Psoas muscle (tissue), 8 donors: ENCODE measurements at regions of chr1 and their contacts with region 1.

Region 1: DNA sequence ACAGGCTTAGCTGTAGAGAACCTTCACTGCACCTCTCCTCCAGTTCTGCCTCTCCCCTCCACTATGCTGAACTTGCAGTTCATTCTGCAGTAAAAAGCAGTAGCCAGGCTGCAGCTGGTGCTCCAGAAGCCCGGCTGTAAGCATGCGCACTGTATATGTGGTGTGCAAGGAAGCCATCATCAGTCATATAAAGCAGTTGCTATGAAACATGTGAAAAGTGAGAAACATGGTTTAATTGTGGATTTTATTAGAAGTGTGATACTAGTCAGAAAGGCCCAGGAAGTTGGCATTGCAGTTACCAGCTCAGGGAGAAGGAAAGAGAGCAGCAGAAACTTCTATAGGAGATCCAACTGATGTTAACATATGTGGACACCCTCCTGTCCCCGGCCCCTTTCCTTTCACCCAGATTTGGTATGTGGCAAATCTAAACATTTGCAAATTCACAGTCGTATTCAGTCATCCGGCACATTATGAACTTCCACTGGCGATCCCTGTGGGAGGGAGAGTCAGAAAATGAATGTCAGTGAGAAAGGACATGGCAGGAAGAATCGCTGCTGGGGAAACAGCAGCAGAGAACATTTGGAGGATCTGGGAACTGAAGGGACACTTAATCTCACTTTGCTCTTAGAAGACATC is 32.8 kb downstream of the DPT start:
- DNase-seq: no peak
- ATAC-seq: no peak
- H3K4me3 ChIP-seq: no peak overlapping the region
- H3K27ac ChIP-seq: no peak overlapping the region
- H3K4me1 ChIP-seq: no peaks in the 10 kb centered on the region
- H3K27me3 ChIP-seq: no peaks in the 10 kb centered on the region
- CTCF ChIP-seq: no peak

Region 2: GRCh38 chr1:168488138-168488537 is 208.1 kb before region 1 on chr1:
- intact Hi-C with region 1: no loop called
- DNase-seq: peak; percentile 63 to 75
- ATAC-seq: peak; percentile 44 to 74 (median 60)
- H3K4me3 ChIP-seq: no peak overlapping the region
- H3K27ac ChIP-seq: no peak overlapping the region
- H3K4me1 ChIP-seq: no peaks in the 10 kb centered on the region
- H3K27me3 ChIP-seq: no peaks in the 10 kb centered on the region
- CTCF ChIP-seq: no peak

Region 3: DNA sequence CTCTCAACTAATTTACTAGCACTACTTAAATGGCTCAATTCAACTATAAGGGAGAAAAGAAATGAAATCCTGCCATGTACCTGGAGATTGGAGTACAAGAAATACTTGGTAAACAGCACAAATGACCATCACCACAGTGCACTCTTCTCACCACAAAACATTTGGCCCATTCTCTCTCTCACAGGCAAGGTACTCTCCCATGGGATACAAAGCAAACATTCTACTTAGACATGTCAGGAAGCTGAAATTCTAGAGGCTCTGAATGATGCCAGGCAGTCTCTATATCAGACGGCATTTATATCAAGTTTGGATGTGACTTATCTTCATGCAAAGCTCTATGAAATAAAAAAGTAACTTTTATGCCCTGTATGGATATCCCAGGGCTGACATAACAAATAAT is 39.8 kb before region 1 on chr1:
- intact Hi-C with region 1: loop called in 1 of 2 experiments (anchors 5 kb)
- DNase-seq: no peak
- ATAC-seq: no peak
- H3K4me3 ChIP-seq: no peak overlapping the region
- H3K27ac ChIP-seq: no peak overlapping the region
- H3K4me1 ChIP-seq: no peaks in the 10 kb centered on the region
- H3K27me3 ChIP-seq: no peaks in the 10 kb centered on the region
- CTCF ChIP-seq: no peak

Region 4: GRCh38 chr1:168834225-168834872 is 138.1 kb after region 1 on chr1:
- intact Hi-C with region 1: no loop called
- DNase-seq: no peak
- ATAC-seq: no peak
- H3K4me3 ChIP-seq: no peak overlapping the region
- H3K27ac ChIP-seq: no peak overlapping the region
- H3K4me1 ChIP-seq: no peaks in the 10 kb centered on the region
- H3K27me3 ChIP-seq: no peaks in the 10 kb centered on the region
- CTCF ChIP-seq: no peak